ENCODE measurements at regions of chr2 and their contacts with region 1.

Region 1: GRCh38 chr2:74919827-74920226 is 38.6 kb upstream of the POLE4 start:
- DNase-seq: peak; percentile 60
- H3K4me3 ChIP-seq: peak overlapping the region; percentile 56
- H3K27ac ChIP-seq: no peak overlapping the region
- H3K4me1 ChIP-seq: peaks cover 4% of the 10 kb centered on the region
- H3K27me3 ChIP-seq: peaks cover 53% of the 10 kb centered on the region
- CTCF ChIP-seq: peak; percentile 90

Region 2: DNA sequence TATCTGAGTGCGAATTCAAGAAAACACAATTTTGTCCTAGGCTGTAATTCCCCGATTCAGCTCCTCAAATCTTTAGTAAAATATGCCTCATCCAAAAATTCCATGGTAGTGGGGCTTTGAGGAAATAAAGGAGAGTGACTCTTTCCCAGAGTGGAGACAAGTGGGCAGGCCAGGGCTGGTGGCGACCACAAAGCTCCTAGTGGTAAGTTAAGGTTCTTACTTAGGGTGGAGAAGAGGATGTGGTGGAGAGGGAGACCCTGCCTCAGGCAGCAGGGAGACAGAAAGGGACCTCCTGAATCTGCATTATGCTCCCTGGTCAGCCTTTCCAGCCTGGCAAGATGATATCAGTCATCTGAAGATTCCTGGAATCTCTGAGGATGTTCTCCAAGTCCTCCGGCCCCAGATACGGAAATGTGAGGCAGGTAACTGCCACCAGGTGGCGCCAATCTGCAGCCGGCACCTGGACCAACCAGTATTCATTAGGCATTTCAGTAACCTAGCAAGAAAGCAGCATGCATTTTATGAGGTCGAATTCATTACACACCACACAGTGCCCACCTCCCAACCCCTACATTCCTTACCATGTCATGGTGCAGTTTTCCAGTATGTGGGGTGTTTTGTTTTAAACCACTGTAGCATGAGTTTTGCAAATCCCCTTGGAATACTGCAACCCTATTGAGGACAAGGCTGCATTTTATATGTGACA is 145.0 kb after region 1 on chr2:
- intact Hi-C with region 1: loop called (anchors 10 kb)
- DNase-seq: peak; percentile 42
- H3K4me3 ChIP-seq: no peak overlapping the region
- H3K27ac ChIP-seq: no peak overlapping the region
- H3K4me1 ChIP-seq: no peaks in the 10 kb centered on the region
- H3K27me3 ChIP-seq: no peaks in the 10 kb centered on the region
- CTCF ChIP-seq: peak; percentile 82